OCI-LY7 (cell line): ENCODE measurements at regions of chr2 and their contacts with region 1.

Region 1: GRCh38 chr2:46364797-46365457 is 67.7 kb downstream of the EPAS1 start:
- DNase-seq: peak; percentile 56
- H3K4me3 ChIP-seq: no peak overlapping the region
- H3K27ac ChIP-seq: no peak overlapping the region
- H3K4me1 ChIP-seq: no peaks in the 10 kb centered on the region
- CTCF ChIP-seq: peak; percentile 98

Region 2: DNA sequence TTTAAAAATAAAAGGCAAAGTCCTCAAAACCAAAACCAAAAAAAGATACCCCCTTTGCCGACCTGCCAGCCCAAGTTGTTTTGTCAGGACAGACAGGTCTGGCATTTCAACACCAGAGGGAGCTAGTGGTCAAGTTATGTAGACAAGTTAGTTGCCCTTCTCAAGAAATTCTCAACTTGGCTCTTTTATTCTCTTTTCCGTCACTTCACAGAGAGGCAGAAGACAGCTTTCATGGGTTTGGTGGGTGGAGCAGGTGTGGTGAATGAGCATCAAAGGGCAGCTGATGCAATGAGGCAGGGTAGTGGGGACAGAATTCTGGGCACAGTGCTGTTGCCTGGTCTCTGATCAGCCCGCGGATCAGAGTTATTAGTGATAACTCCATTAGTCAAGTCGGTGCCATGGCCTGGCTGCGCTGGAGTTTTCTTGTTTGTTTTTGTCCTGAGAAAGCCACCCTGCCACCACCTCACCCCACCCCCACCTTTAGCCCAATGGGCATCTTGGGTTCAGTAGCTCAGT is 371.4 kb before region 1 on chr2:
- CTCF ChIA-PET with region 1: no interaction called
- POLR2A ChIA-PET with region 1: no interaction called
- intact Hi-C with region 1: loop called (anchors 2 kb)
- DNase-seq: peak; percentile 73
- H3K4me3 ChIP-seq: no peak overlapping the region
- H3K27ac ChIP-seq: no peak overlapping the region
- H3K4me1 ChIP-seq: no peaks in the 10 kb centered on the region
- CTCF ChIP-seq: peak; percentile 83

Region 3: GRCh38 chr2:46010925-46011490 is 353.9 kb before region 1 on chr2:
- CTCF ChIA-PET with region 1: no interaction called
- POLR2A ChIA-PET with region 1: no interaction called
- intact Hi-C with region 1: loop called (anchors 5 kb)
- DNase-seq: peak; percentile 46
- H3K4me3 ChIP-seq: no peak overlapping the region
- H3K27ac ChIP-seq: no peak overlapping the region
- H3K4me1 ChIP-seq: no peaks in the 10 kb centered on the region
- CTCF ChIP-seq: peak; percentile 89

Region 4: GRCh38 chr2:46062637-46063412 is 302.1 kb before region 1 on chr2:
- CTCF ChIA-PET with region 1: no interaction called
- POLR2A ChIA-PET with region 1: no interaction called
- intact Hi-C with region 1: loop called (anchors 10 kb)
- DNase-seq: peak; percentile 68
- H3K4me3 ChIP-seq: no peak overlapping the region
- H3K27ac ChIP-seq: no peak overlapping the region
- H3K4me1 ChIP-seq: no peaks in the 10 kb centered on the region
- CTCF ChIP-seq: peak; percentile 89

Region 5: DNA sequence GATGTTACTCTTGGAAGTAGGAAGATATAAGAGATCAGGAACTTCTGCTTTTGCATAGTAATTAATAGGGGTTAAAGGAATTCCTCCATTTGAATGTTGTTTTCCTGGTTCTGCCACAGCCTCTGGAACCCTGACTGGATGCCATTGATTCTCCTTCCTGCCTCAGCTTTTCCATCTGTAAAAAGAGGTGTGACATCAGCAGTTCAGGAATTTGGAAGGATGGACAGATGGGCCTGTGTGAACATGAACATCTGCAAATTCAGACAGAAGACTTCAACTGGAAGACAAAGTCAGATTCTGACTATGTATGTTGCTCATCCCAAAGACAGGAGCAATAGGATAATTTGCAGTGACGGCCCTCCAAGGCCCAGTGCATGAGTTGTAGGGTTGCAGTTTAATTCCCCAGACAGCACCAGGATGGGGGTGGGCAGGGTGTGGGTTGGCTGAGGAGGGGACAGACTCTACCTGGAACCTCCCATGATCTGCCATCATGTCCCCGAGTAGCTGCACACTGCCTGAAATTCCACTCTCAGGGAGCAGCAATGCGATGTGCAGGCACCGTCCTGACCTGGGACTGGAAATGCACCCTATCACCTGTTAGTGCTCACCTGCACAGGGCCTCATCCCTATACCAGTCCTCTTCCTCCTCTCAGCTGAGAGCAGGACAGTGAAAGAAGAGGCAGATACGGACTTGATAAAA is 166.6 kb before region 1 on chr2:
- CTCF ChIA-PET with region 1: no interaction called
- POLR2A ChIA-PET with region 1: no interaction called
- intact Hi-C with region 1: loop called (anchors 10 kb)
- DNase-seq: no peak
- H3K4me3 ChIP-seq: no peak overlapping the region
- H3K27ac ChIP-seq: no peak overlapping the region
- H3K4me1 ChIP-seq: no peaks in the 10 kb centered on the region
- CTCF ChIP-seq: no peak

Region 6: DNA sequence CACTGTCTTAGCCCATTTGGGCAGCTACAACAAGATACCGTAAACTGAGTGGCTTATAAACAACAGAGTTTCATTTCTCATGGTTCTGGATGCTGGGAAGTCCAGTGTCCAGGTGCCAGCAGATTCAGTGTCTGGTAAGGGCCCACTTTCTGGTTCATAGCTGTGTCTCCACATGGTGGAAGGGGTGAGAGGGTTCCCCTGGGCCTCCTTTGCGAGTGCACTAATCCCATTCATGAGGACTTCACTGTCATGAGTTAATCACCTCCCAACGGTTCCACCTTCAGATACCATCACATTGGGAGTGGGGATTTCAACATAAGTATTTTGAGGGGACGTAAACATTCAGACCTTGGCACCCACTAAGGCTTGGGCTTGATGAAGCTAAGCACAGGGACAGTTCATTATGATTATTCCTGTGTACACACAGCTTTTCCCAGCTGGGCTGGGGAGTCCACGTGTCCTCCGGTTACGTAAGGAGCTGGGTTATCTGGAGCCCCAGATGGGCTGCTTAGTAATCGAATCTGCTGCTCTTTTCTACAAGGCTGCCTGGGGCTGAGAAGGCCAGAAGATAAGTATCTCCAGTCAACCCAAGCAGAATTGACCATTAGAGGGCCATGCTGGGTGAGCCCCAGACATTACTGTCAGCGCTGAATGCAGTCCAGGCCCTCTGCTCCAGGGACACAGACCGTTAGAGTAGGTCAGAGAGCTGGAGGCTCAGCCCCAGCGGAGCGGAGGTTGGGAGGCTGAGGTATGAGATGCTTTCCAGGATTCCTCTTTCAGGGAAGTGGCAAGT is 25.1 kb before region 1 on chr2:
- CTCF ChIA-PET with region 1: no interaction called
- POLR2A ChIA-PET with region 1: no interaction called
- intact Hi-C with region 1: no loop called
- DNase-seq: no peak
- H3K4me3 ChIP-seq: no peak overlapping the region
- H3K27ac ChIP-seq: no peak overlapping the region
- H3K4me1 ChIP-seq: no peaks in the 10 kb centered on the region
- CTCF ChIP-seq: no peak